ENCODE measurements at regions of chr2 and their contacts with region 1.

Region 1: DNA sequence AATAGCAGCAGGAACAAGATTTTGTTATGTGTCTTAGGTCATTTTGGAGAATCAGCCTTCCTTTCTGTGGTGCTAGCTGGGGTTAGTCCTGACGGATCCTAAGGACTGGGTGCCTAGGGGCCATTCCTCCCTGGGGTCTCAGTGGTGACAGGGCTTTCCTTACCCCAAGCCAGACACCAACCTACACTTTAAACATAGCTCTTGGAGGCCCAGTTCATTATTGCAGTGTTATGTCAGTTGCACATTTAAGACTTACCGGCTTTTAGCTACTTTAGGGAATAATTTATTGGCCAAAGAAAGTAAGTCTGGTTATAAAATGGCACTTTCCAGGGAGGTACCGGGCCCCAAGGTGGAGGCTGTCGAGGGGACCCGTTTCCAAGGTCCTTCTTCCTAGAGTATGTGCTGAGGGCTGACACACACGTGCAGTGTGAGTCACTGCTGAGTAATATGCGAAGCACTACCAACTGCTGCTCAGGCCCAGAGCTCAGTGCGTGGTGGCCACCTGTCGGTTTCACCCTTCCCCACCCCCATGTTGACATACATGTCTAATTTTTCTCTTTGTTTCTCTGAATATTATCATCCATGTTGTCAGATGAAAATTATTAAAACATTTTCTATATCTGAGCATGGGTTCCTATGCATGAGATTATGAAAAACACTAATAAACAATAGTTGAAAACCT is 37.0 kb upstream of the GRHL1 start:
- DNase-seq: peak; percentile 34 to 81 (median 52)
- ATAC-seq: peak; percentile 99
- H3K4me3 ChIP-seq: no peak overlapping the region
- H3K27ac ChIP-seq: peak overlapping the region; percentile 43; the same call in 2 of the 3 replicates
- H3K4me1 ChIP-seq: peaks cover 0 to 8% of the 10 kb centered on the region in 2 experiments; a peak in 3 of 5 replicates
- H3K27me3 ChIP-seq: no peaks in the 10 kb centered on the region
- CTCF ChIP-seq: peak; percentile 59 to 78 (median 61)
- EP300 ChIP-seq: peak; percentile 61
- POLR2A ChIP-seq: no peak
- RAD21 ChIP-seq: peak; percentile 85 to 89

Region 2: GRCh38 chr2:9813312-9814133 is 101.0 kb before region 1 on chr2:
- CTCF ChIA-PET with region 1: interaction called, 14 read pairs
- POLR2A ChIA-PET with region 1: no interaction called
- in situ Hi-C with region 1: no loop called
- intact Hi-C with region 1: loop called (anchors 1 kb)
- DNase-seq: peak; percentile 79 to 87 (median 84)
- ATAC-seq: peak; percentile 94
- H3K4me3 ChIP-seq: no peak overlapping the region
- H3K27ac ChIP-seq: no peak overlapping the region
- H3K4me1 ChIP-seq: peaks cover 19 to 36% of the 10 kb centered on the region in 2 experiments; a peak in 4 of 5 replicates
- H3K27me3 ChIP-seq: no peaks in the 10 kb centered on the region
- CTCF ChIP-seq: peak; percentile 88 to 95 (median 90)
- EP300 ChIP-seq: no peak
- POLR2A ChIP-seq: no peak
- RAD21 ChIP-seq: peak; percentile 77 to 93